Dorsolateral prefrontal cortex (tissue), 120 donors: ENCODE measurements at regions of chr1 and their contacts with region 1.

Region 1: GRCh38 chr1:154272217-154272998 is at the start of gene HAX1:
- DNase-seq: peak; percentile 84 to 93 (median 89)
- H3K4me3 ChIP-seq: peak within 1 kb of the TSS; percentile 50 to 99 (median 92)
- H3K27ac ChIP-seq: peak within 1 kb of the TSS; percentile 37 to 97 (median 89)
- H3K27me3 ChIP-seq: no peaks in the 10 kb centered on the region
- CTCF ChIP-seq: peak; percentile 72 to 93 (median 85)
- total RNA-seq, gene HAX1: 51.9 to 102 (median 78.4) TPM

Region 2: DNA sequence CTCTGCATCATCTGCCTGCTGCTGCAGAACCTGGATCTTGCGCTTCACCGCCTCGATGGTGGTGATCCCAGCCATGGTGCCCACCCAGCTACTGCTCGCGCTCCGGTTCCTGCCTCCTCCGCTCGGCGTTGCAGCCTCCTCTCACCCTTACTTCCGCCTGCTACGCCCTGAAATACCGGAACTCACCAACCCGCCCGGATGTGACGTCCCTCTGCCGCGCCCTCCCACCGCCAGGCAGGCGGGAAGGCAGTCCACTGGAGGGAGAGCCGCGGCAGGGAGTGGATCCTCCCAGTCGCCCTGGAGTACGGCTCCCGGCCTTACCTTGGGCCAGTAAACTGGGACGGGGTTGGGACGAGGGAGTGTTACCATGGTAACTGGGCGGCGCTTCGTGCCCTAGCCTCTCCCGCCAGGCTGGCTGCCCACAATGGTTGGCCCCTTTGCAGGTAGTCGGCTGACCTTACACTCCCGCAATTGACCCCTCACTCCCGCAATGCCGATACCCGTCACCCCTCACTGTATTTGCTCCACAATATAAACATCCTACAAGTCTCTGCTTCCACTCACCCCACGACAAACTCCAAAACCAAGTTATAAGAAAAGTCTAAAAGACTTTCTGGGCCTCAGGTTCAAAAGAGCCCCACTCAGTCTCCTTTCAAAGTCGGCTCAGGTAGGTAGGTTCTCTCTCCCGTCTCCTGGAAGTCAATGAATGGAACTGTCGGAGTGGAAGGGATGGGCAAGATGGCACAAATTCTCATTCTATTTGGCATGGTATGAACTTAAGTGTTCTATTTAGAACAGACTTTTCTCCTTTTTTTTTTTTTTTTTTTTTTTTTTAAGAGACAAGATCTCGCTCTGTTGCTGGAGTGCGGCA is 89.1 kb before region 1 on chr1:
- intact Hi-C with region 1: loop called in 1 of 2 experiments (anchors 5 kb)
- DNase-seq: peak; percentile 91 to 98 (median 96)
- H3K4me3 ChIP-seq: peak overlapping the region; percentile 66 to 99 (median 93)
- H3K27ac ChIP-seq: peak overlapping the region in 58 of 59 donors; percentile 46 to 96 (median 86)
- H3K27me3 ChIP-seq: no peaks in the 10 kb centered on the region
- CTCF ChIP-seq: peak in 46 of 56 donors; percentile 3 to 54 (median 32)

Region 3: DNA sequence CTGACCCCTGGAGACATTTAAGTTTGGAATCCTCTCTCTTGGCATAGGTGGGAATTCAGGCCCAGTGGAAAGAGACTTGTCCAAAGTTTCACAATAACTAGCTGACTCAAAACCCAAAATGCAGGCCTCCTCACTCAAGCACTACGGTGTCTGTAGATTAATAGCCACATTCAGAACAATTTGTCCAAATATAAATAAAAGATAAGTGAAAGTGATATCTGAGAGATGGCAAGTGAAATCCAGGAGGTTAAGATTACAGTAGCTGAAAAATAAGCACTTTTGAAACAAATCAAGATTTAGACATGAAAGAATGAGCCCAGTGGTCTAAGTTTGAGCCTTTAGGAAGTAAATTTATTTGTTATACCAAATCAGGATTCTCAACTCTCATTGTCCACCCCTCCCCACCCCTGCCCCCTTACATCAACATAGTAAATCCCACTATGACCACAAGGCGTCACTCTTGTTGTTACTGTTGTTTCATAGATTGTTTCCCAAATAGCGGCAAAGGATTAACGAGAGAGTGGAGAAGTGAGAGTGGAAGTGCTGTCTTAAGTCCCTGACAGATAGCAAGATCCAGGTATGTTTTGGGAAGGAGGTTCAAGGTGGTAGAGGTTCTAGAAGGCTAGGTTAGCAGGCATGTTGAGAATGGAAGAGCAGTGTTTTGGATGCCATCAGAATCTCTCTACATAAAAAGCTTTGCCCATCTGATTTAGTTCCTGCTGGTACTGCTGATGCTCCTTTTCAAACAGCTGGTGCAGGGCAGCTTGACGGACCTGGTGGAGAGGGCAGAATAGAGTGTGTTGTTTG is 73.4 kb before region 1 on chr1:
- intact Hi-C with region 1: loop called in 1 of 2 experiments (anchors 2 kb)
- DNase-seq: no peak
- H3K4me3 ChIP-seq: peak overlapping the region in 16 of 59 donors; percentile 3 to 52 (median 21)
- H3K27ac ChIP-seq: peak overlapping the region in 12 of 59 donors; percentile 4 to 66 (median 20)
- H3K27me3 ChIP-seq: no peaks in the 10 kb centered on the region
- CTCF ChIP-seq: peak in 54 of 56 donors; percentile 13 to 74 (median 55)

Region 4: DNA sequence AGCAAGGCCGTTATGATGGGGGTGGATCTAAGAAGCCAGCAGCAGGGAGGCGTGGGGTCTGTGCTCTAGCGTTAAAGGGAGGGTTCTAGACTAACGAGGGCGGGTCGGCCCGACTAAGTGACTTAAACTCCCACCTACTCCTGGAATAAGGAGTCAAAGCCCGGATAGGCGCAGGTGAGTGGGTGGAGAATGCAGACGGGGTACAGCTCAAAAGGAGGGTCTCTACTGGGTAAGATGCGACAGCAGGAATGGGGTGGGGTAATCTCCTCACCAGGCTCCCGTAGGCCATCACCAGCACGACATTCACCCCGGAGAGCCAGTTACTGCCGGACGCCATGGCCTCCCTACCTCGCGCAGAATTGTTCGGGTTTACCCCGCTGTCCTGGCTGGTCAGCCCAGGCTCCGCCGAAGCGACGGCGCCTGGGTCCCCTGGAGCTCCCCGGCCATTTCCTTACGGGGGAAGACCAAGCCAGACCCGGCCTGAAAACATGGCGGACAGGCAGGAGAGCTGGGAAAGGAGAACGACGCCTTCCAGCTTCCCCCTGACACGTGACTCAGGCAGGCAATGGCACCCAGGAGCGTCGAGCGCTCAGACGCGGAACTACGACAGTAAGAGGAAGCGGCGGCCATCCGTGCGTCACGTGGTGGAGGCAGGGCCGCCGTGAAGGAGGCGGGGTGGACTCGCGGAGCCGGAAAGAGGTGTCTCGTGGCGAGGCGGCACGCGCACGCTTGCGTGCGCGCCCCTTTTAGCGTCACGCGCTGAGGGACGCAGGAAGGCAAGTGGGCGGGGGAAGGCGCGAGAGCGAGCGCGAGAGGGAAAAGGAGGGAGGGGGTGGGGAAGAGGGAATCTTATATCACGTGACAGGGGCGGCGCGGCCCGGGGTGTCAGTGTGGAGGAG is 52.1 kb before region 1 on chr1 and contains the start of gene UBAP2L:
- intact Hi-C with region 1: loop called (anchors 1 to 2 kb)
- DNase-seq: peak; percentile 96 to 99 (median 98)
- H3K4me3 ChIP-seq: peak within 1 kb of the TSS; percentile 71 to 100 (median 93)
- H3K27ac ChIP-seq: peak within 1 kb of the TSS; percentile 91 to 100 (median 99)
- H3K27me3 ChIP-seq: no peaks in the 10 kb centered on the region
- CTCF ChIP-seq: peak in 15 of 56 donors; percentile 6 to 52 (median 16)
- total RNA-seq, gene UBAP2L: 100 to 166 (median 130) TPM

Region 5: GRCh38 chr1:154288661-154289060 is 16.3 kb after region 1 on chr1:
- intact Hi-C with region 1: no loop called
- DNase-seq: no peak
- H3K4me3 ChIP-seq: no peak overlapping the region
- H3K27ac ChIP-seq: no peak overlapping the region
- H3K27me3 ChIP-seq: peaks cover 0 to 6% (median 0%) of the 10 kb centered on the region in 45 donors
- CTCF ChIP-seq: no peak

Region 6: GRCh38 chr1:154324669-154325582 is 52.5 kb after region 1 on chr1 and contains the start of gene ATP8B2:
- intact Hi-C with region 1: loop called in 1 of 2 experiments (anchors 5 kb)
- DNase-seq: peak; percentile 62 to 88 (median 72)
- H3K4me3 ChIP-seq: peak within 1 kb of the TSS; percentile 63 to 89 (median 77)
- H3K27ac ChIP-seq: peak within 1 kb of the TSS in 58 of 59 donors; percentile 74 to 96 (median 89)
- H3K27me3 ChIP-seq: no peaks in the 10 kb centered on the region
- CTCF ChIP-seq: peak; percentile 55 to 95 (median 88)
- total RNA-seq, gene ATP8B2: 28.2 to 80.0 (median 45.7) TPM